Activated B cell treated with CpG ODN at 0.5 μM for 24 hours (primary cell): ENCODE measurements at regions of chr5 and their contacts with region 1.

Region 1: DNA sequence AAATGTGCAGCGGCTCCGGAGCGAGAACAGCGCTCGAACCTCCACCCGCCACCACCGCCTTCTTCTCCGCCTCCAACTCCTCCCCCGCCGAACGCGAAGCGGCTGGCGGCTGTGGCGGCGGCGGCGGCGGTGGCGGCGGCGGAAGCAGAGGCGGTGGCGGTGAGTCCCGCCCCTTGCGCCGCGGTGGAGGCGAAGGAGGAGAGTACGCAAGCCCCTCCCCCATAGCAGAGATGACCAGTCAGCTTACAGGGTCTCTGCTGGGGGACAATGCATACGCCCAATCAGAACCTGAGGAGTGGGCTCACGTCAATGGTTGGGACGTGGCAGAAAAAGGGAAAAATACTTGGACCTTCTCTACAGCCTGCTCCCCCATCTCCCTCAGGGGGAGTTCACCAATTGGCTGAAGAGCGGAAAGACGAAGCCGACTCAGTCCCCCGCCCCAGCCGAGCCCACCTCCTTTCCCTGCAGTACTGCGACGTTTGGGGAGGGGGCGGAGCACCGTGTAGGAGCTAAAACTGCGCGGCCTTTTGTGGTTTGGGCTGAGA is at the start of gene PJA2:
- DNase-seq: peak; percentile 96
- ATAC-seq: peak; percentile 86
- H3K4me3 Mint-ChIP-seq: peak within 1 kb of the TSS; percentile 99
- H3K27ac Mint-ChIP-seq: peak within 1 kb of the TSS; percentile 94
- H3K4me1 Mint-ChIP-seq: peaks cover 49% of the 10 kb centered on the region
- H3K27me3 Mint-ChIP-seq: no peaks in the 10 kb centered on the region
- CTCF ChIP-seq: no peak
- total RNA-seq, gene PJA2: 55.3 and 58.0 TPM in 2 replicates

Region 2: DNA sequence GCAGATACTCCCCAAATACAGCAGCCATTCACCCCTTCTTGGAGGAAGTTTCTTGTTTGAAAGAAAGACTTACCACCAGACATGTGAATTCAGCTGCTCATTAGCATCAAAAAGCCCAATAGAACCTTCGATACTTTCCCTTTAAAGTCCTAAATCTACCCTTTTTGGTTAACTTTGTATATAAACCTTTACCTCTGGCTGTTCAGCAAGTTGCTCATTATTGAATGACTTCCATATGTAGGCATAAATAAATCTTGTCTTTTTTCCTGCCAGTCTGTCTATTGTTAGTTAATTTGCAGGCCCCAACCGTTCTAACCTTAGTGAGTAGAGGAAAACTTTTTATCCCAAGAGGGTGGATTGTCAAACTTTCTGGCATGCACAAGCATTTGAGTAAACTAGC is 1000.1 kb before region 1 on chr5:
- CTCF ChIA-PET with region 1: no interaction called
- POLR2A ChIA-PET with region 1: no interaction called
- intact Hi-C with region 1: no loop called
- DNase-seq: no peak
- ATAC-seq: no peak
- H3K4me3 Mint-ChIP-seq: no peak overlapping the region
- H3K27ac Mint-ChIP-seq: no peak overlapping the region
- H3K4me1 Mint-ChIP-seq: no peaks in the 10 kb centered on the region
- H3K27me3 Mint-ChIP-seq: peaks cover 3% of the 10 kb centered on the region
- CTCF ChIP-seq: no peak

Region 3: GRCh38 chr5:108748401-108749127 is 661.4 kb before region 1 on chr5:
- CTCF ChIA-PET with region 1: no interaction called
- POLR2A ChIA-PET with region 1: interaction called, 19 read pairs
- intact Hi-C with region 1: loop called (anchors 1 kb)
- DNase-seq: peak; percentile 92
- ATAC-seq: peak; percentile 92
- H3K4me3 Mint-ChIP-seq: peak overlapping the region; percentile 92
- H3K27ac Mint-ChIP-seq: peak overlapping the region; percentile 94
- H3K4me1 Mint-ChIP-seq: peaks cover 22% of the 10 kb centered on the region
- H3K27me3 Mint-ChIP-seq: no peaks in the 10 kb centered on the region
- CTCF ChIP-seq: no peak

Region 4: DNA sequence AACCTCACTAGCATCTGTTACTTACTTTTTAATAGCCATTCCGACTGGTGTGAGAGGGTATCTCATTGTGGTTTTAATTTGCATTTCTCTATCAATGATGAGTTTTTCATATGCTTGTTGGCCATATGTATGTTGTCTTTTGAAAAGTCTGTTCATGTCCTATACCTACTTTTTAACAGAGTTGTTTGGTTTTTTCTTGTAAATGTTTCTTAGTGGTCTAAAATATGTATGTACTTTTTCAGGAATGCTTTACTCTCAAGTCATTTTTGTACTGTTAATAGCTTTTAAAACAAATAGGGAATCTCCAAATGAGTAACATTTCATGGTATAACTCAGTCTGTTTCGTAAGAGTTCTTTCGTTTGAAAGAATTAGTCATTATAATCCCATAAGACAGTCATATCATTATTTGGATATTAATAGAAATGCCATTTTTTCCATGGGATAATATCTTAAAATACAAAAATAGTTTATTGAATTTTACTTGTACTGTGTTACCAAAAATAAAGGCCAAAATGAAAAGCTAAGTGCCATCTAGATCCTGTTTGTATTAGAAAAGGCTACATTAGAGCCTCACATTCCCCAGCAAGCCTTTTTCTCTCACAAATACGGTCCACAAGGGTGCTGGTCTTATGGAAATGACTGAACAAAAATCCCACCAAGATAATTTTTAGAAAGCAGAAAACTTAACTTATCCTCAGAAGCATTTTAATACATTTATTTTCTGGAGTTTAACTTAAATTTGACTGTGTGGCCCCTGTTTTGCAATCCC is 247.8 kb before region 1 on chr5:
- CTCF ChIA-PET with region 1: no interaction called
- POLR2A ChIA-PET with region 1: interaction called, 3 read pairs
- intact Hi-C with region 1: loop called (anchors 5 kb)
- DNase-seq: no peak
- ATAC-seq: no peak
- H3K4me3 Mint-ChIP-seq: no peak overlapping the region
- H3K27ac Mint-ChIP-seq: peak overlapping the region; percentile 51
- H3K4me1 Mint-ChIP-seq: peaks cover 31% of the 10 kb centered on the region
- H3K27me3 Mint-ChIP-seq: no peaks in the 10 kb centered on the region
- CTCF ChIP-seq: no peak

Region 5: DNA sequence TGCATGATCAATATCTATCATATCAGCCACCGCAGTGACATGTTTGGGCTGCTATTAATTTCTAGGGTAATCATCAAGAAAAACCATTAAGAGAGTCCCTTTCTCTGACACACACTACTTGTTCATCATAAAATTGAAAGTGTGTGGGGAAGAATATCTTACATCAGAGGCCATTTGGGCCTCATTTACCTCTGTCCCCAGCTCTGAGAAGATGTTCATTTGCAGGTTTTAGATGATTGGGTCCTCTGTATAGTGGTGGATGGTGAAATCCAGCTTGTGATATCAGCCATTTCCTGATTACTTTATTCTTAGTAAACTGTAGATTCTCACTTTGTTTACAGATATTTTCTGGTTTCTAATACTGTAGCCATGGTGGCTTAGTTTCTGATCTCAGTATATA is 29.7 kb after region 1 on chr5:
- CTCF ChIA-PET with region 1: no interaction called
- POLR2A ChIA-PET with region 1: no interaction called
- intact Hi-C with region 1: loop called (anchors 1 kb)
- DNase-seq: no peak
- ATAC-seq: no peak
- H3K4me3 Mint-ChIP-seq: no peak overlapping the region
- H3K27ac Mint-ChIP-seq: no peak overlapping the region
- H3K4me1 Mint-ChIP-seq: no peaks in the 10 kb centered on the region
- H3K27me3 Mint-ChIP-seq: no peaks in the 10 kb centered on the region
- CTCF ChIP-seq: no peak

Region 6: GRCh38 chr5:110738812-110739651 is 1329.1 kb after region 1 on chr5 and contains the start of gene SLC25A46:
- CTCF ChIA-PET with region 1: no interaction called
- POLR2A ChIA-PET with region 1: interaction called, 8 read pairs
- intact Hi-C with region 1: loop called (anchors 2 kb)
- DNase-seq: peak; percentile 79
- ATAC-seq: peak; percentile 82
- H3K4me3 Mint-ChIP-seq: peak within 1 kb of the TSS; percentile 97
- H3K27ac Mint-ChIP-seq: peak within 1 kb of the TSS; percentile 96
- H3K4me1 Mint-ChIP-seq: peaks cover 21% of the 10 kb centered on the region
- H3K27me3 Mint-ChIP-seq: peaks cover 3% of the 10 kb centered on the region
- CTCF ChIP-seq: no peak
- total RNA-seq, gene SLC25A46: 39.9 and 42.2 TPM in 2 replicates